Thyroid gland (tissue), 4 donors: ENCODE measurements at regions of chr9 and their contacts with region 1.

Region 1: DNA sequence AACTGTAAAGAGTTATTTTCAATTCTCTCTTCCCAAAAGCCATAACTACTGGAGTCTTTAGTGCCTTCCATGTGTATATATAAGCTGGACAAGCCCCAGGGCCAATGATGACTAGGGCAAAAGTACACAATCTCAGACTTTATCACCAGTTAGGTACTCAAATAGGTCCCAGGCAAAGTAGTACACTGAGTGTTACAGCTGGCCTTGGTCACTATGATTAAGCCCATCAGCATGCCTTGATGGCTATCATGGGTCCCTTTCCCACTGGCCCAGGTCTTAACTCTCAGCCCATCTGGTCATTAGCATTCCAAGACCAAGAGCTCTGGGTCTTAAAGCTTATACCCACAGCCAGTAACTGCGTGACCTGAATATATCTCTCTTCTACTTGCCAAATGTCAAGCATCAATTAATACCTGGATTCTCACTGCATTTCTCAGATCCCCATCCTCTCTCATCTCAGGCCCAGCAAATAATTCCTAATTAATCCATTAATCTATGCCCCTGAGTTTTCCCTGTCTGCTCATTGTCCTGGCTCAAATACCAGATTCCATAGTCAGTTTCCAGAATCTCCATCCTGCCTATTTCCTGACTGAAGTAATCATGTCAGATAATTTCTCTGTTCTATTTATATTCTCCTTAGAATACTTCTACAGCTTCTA is 62.3 kb downstream of the NR6A1 start:
- DNase-seq: no peak
- H3K4me3 ChIP-seq: no peak overlapping the region
- H3K27ac ChIP-seq: no peak overlapping the region
- H3K4me1 ChIP-seq: peaks cover 11 to 36% of the 10 kb centered on the region in 2 donors
- H3K27me3 ChIP-seq: no peaks in the 10 kb centered on the region
- CTCF ChIP-seq: no peak
- POLR2A ChIP-seq: no peak

Region 2: DNA sequence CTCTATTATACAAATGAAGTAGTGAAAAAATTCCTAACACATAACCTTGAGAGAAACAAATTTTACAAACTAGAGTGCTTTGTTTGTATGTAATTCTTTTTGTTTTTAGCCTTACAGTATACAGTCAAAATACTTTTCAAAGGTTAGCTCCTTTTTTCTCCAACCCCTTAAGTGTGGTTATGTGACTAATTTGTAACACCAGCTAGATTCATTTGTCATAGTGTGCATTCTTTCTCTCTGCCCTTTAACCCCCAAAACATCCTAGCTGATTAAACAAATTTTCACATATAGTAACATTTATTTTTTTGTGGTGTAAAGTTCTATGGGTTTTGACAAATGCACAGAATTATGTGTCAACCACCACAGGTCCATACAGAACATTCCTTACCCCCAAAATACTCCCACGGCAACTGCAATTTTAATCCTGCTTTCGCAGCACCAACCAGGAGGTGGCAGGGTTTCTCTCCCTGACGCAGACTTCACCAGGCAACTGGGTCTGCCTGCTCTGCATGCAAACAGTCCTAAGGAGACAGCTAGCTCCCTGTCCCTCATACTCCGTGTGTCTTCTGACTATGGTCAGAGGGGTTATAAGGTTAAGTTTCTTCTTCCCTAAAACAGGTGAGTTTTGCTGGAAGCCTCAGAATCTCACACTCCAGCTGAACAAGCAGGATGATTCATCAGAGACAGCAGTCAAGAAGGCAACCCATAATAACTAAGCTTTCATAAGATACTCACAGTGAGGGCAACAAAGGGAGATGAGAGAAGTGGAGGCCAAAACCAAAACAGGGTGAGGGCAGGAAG is 157.1 kb before region 1 on chr9:
- intact Hi-C with region 1: loop called (anchors 10 kb)
- DNase-seq: peak; percentile 50 to 58
- H3K4me3 ChIP-seq: no peak overlapping the region
- H3K27ac ChIP-seq: no peak overlapping the region
- H3K4me1 ChIP-seq: peaks cover 0 to 21% of the 10 kb centered on the region in 2 donors
- H3K27me3 ChIP-seq: no peaks in the 10 kb centered on the region
- CTCF ChIP-seq: peak in 4 of 6 experiments; percentile 42 to 62 (median 52)
- POLR2A ChIP-seq: no peak

Region 3: DNA sequence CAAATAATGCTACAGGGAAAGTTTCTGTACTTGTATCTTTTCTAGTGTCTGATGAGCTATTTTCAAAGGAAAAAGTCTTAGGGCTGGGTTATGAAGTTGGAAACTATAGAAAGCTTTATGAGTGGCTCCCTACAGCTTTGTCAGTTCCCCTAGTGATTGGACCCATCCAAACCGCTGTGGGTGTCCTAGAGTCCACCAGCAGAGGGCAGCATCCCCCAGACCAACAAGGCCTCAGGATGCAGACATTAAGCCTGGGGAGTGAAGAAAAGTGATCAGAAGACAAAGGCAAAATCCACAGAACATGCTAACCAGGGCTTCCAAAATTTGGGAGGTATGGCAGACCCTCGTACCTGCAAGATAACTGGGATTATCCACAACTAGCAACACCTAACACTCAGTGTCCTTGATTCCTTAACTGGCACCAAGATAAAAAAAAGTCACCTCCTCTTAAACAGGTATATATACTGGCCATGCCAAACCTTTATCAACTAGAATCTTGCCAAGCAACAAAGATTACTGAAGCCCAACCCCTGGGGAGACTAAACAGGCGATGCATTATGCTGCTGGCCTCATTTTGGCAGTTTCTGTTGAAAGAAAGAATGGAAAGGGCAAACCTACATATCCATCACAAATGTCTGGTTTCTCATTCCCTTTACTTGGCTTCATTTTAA is 91.2 kb before region 1 on chr9:
- intact Hi-C with region 1: loop called (anchors 2 kb)
- DNase-seq: peak; percentile 81 to 86
- H3K4me3 ChIP-seq: no peak overlapping the region
- H3K27ac ChIP-seq: peak overlapping the region; percentile 14 to 51 (median 21)
- H3K4me1 ChIP-seq: peaks cover 19 to 37% of the 10 kb centered on the region in 2 donors
- H3K27me3 ChIP-seq: no peaks in the 10 kb centered on the region
- CTCF ChIP-seq: peak; percentile 72 to 93 (median 86)
- POLR2A ChIP-seq: no peak